ENCODE measurements at regions of chr6 and their contacts with region 1.

Region 1: GRCh38 chr6:13272131-13273046 is 55.9 kb downstream of the TBC1D7 start:
- DNase-seq: no peak
- ATAC-seq: no peak
- H3K4me3 Mint-ChIP-seq: no peak overlapping the region
- H3K27ac Mint-ChIP-seq: no peak overlapping the region
- H3K4me1 Mint-ChIP-seq: peaks cover 21% of the 10 kb centered on the region
- H3K27me3 Mint-ChIP-seq: peaks cover 4% of the 10 kb centered on the region

Region 2: GRCh38 chr6:13216236-13217014 is 56.0 kb before region 1 on chr6:
- CTCF ChIA-PET with region 1: no interaction called
- POLR2A ChIA-PET with region 1: no interaction called
- intact Hi-C with region 1: no loop called
- DNase-seq: no peak
- ATAC-seq: no peak
- H3K4me3 Mint-ChIP-seq: no peak overlapping the region
- H3K27ac Mint-ChIP-seq: no peak overlapping the region
- H3K4me1 Mint-ChIP-seq: peaks cover 4% of the 10 kb centered on the region
- H3K27me3 Mint-ChIP-seq: peaks cover 3% of the 10 kb centered on the region

Region 3: GRCh38 chr6:13302751-13303667 is 30.6 kb after region 1 on chr6:
- CTCF ChIA-PET with region 1: interaction called, 3 read pairs
- POLR2A ChIA-PET with region 1: interaction called, 3 read pairs
- intact Hi-C with region 1: loop called in 1 of 2 experiments (anchors 1 kb)
- DNase-seq: peak; percentile 79
- ATAC-seq: peak; percentile 95
- H3K4me3 Mint-ChIP-seq: no peak overlapping the region
- H3K27ac Mint-ChIP-seq: peak overlapping the region; percentile 94
- H3K4me1 Mint-ChIP-seq: peaks cover 41% of the 10 kb centered on the region
- H3K27me3 Mint-ChIP-seq: no peaks in the 10 kb centered on the region

Region 4: DNA sequence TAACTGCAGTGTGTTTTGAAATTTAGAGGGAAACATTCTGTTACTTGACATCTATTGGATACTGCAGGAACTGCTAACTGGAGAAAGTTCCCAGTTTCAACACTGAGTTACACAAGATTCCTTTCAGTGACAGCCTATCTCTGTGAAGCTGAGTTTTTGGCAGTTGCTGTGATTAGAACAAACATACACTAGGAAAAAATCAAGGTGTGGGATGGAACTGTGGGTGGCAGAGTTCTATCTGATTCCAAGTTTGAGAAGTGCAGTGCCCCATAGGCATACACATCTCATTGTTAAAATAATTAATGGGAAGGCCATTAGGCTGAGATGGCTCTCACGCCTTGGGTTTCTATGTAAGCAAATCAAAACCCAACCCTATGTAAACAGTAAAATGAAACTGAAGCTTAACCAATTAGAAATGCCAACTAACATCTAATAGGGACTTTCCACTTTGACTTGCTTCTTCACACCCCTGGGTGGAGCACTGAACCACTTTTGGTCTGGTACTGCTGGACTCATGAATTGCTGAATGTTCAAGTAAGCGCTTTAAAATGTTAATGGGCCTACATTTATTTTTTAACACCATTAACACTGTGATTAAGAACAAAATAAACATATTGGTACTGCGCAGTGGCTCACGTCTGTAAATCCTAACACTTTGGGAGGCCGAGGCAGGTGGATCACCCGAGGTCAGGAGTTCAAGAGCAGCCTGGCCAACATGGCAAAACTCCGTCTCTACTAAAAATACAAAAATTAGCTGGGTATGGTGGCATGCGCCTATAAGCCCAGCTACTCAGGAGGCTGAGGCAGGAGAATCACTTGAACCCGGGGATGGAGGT is 111.2 kb after region 1 on chr6:
- CTCF ChIA-PET with region 1: no interaction called
- POLR2A ChIA-PET with region 1: no interaction called
- intact Hi-C with region 1: no loop called
- DNase-seq: no peak
- ATAC-seq: peak; percentile 81
- H3K4me3 Mint-ChIP-seq: no peak overlapping the region
- H3K27ac Mint-ChIP-seq: no peak overlapping the region
- H3K4me1 Mint-ChIP-seq: peaks cover 11% of the 10 kb centered on the region
- H3K27me3 Mint-ChIP-seq: no peaks in the 10 kb centered on the region

Measured in activated CD4-positive, alpha-beta T cell treated with anti-CD3 and anti-CD28 coated beads for 36 hours (primary cell).